ENCODE measurements at regions of chr16 and their contacts with region 1.

Region 1: GRCh38 chr16:21083729-21084268 is 66.8 kb downstream of the DNAH3 start:
- DNase-seq: peak; percentile 62 to 76 (median 67)
- ATAC-seq: peak; percentile 83 to 98 (median 92)
- H3K4me3 ChIP-seq: no peak overlapping the region
- H3K27ac ChIP-seq: peak overlapping the region in 1 of 12 donors; percentile 17
- H3K4me1 ChIP-seq: peaks cover 0 to 5% (median 1%) of the 10 kb centered on the region in 12 donors
- H3K27me3 ChIP-seq: no peaks in the 10 kb centered on the region
- CTCF ChIP-seq: peak; percentile 66 to 84 (median 79)
- POLR2A ChIP-seq: no peak

Region 2: DNA sequence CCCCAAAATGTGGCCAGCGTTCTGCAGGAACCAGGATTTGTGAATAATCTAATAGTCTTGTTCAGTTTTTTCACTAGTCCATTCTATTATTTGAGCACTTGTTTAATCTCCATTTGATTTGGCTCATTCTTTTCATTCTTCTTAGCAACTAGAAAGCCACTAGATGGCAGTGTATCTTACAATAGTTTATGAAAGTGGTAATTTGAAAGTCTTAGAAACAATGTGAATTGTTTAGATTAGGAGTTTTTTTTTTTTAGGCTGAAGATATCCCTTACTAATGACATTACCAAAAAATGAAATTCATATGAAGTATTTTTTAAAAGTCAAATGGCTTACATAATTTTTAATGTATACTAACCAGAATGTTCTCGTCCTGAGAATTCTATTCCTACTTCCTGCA is 284.2 kb before region 1 on chr16:
- intact Hi-C with region 1: loop called in 5 of 10 experiments (anchors 2 to 10 kb)
- DNase-seq: no peak
- ATAC-seq: peak in 1 of 4 donors; percentile 46
- H3K4me3 ChIP-seq: no peak overlapping the region
- H3K27ac ChIP-seq: no peak overlapping the region
- H3K4me1 ChIP-seq: peaks cover 0 to 1% (median 0%) of the 10 kb centered on the region in 12 donors
- H3K27me3 ChIP-seq: no peaks in the 10 kb centered on the region
- CTCF ChIP-seq: peak in 11 of 12 donors; percentile 30 to 70 (median 57)
- POLR2A ChIP-seq: no peak

Region 3: DNA sequence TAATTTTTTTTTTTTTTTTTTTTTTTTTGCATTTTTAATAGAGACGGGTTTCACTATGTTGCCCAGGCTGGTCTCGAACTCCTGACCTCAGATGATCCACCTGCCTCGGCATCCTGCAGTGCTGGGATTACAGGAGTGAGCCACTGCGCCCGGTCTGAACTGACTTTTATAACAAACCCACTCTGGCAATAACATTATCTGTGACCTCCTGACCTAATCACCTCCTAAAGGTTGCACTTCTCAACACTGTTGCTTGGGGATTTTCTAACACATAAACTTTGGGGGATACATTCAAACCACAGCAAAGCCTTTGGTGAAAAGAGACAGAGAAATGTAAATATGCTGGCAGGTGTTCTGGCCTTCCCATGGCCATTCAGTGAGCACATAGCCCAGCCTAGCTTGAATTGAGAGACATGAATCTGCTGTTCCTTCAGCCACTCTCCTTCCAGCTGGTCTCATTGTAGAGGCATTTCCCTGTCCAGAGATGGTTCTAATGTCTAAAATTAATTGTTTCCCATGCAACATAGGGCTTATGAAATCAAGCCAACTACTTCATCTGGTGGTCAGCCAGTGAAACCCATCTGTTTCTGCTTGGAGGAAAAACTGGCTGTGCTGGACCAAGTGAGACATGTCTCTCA is 154.9 kb before region 1 on chr16:
- intact Hi-C with region 1: loop called in 1 of 10 experiments (anchors 10 kb)
- DNase-seq: no peak
- ATAC-seq: peak in 3 of 4 donors; percentile 22 to 60 (median 35)
- H3K4me3 ChIP-seq: no peak overlapping the region
- H3K27ac ChIP-seq: peak overlapping the region in 6 of 12 donors; percentile 62 to 82 (median 78)
- H3K4me1 ChIP-seq: peaks cover 0 to 22% (median 8%) of the 10 kb centered on the region in 12 donors
- H3K27me3 ChIP-seq: no peaks in the 10 kb centered on the region
- CTCF ChIP-seq: no peak
- POLR2A ChIP-seq: no peak

Region 4: GRCh38 chr16:20939611-20940010 is 144.2 kb before region 1 on chr16:
- intact Hi-C with region 1: no loop called
- DNase-seq: no peak
- ATAC-seq: no peak
- H3K4me3 ChIP-seq: no peak overlapping the region
- H3K27ac ChIP-seq: no peak overlapping the region
- H3K4me1 ChIP-seq: peaks cover 0 to 15% (median 0%) of the 10 kb centered on the region in 12 donors
- H3K27me3 ChIP-seq: no peaks in the 10 kb centered on the region
- CTCF ChIP-seq: no peak
- POLR2A ChIP-seq: no peak